Activated T-helper 2 cell treated with anti-CD3 and anti-CD28 coated beads, Interferon-gamma antibody, Interleukin-2, Interleukin-4, amounts not matched to agents 10 μg/mL and 5 μg/mL and 100 μg/mL, durations not matched to agents 14 hours and 24 hours and 36 hours (primary cell): ENCODE measurements at regions of chr3 and their contacts with region 1.

Region 1: DNA sequence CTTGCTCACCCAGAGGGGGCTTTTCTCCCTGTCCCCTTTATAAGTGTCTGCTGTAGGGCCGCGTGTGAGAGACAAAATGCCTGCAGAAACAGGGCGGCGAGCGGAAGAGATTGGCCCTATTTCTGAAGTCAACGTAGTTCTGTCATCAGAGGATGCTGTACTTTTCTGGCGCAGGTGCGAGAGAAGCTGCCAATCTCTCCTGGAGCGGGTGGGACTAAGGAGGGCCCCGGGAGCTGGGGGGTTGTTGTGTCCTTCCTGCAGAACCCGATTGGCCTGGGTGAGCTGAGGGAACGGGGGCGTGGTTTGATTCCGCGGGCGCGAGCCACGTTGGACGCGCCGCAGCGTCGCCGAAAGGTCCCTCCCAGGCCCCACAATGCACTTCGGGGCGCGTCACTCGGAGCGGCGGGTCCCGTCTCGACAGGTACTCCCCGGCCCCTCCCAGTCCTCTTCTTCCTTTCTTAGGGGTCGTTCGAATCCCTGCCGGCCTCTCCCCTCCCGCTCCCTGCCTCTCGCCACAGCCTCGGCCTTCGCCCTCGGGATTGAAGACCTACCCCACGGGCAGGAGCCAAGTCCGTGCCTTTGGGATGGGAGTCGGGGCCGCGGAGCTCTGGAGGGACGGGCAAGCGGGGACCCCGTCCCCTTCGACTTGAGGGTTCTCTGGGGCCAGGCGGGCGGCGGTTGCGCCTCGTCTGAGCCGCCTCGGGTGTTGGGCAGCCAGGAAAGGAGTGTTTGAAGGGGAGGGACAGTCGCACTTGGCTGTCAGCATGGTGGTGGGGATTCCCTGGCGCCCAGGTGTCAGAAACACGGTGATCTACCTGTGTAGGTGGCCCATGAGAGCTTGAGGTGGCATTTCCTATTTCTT is at the start of gene SEC22A:
- DNase-seq: peak; percentile 96
- H3K4me3 Mint-ChIP-seq: peak within 1 kb of the TSS; percentile 85
- H3K27ac Mint-ChIP-seq: peak within 1 kb of the TSS; percentile 93
- H3K4me1 Mint-ChIP-seq: peaks cover 21% of the 10 kb centered on the region
- H3K27me3 Mint-ChIP-seq: peaks cover 9% of the 10 kb centered on the region
- total RNA-seq, gene SEC22A: 17.0 and 18.5 TPM in 2 replicates

Region 2: DNA sequence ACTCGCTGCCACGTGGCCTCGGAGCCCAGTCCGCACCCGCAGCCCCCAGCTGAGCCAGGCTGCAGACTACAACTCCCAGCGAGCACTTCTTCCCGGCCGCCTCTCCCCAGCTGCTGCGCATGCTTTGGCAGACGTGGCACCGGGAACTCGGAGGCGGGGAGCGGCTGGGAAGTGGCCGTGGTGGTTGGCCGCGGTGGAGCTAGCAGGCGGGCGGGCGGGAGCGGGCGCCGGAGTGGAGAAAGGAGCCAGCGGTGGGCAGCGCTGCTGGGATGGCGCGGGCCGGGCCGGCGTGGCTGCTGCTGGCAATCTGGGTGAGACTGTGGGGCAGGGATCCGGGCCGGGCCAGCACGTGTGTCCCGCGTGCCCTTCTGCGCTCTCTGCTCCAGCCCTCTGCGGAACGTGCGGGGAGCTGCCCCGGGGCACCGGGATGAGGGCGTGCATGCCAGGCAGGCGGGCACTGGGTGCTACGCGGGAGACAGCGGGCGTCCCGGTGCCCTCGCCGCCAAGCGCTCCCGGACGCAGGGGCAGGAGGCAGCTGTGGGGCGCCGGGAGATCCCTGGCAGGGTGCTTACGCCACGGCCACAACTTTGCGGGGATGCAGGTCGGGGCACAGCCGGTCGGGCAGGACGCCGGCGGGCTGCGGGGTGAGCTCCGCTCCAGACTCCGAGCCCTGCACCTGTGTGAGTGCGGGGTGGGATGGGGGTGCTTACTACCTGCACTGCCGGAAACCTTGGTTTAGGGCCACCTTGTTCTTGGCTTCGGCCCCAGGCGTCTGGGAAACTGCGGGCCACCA is 134.7 kb before region 1 on chr3 and contains the start of gene PDIA5:
- intact Hi-C with region 1: loop called (anchors 5 kb)
- DNase-seq: peak; percentile 57
- H3K4me3 Mint-ChIP-seq: peak within 1 kb of the TSS; percentile 85
- H3K27ac Mint-ChIP-seq: peak within 1 kb of the TSS; percentile 17
- H3K4me1 Mint-ChIP-seq: peaks cover 35% of the 10 kb centered on the region
- H3K27me3 Mint-ChIP-seq: peaks cover 7% of the 10 kb centered on the region
- total RNA-seq, gene PDIA5: 29.0 and 32.3 TPM in 2 replicates

Region 3: GRCh38 chr3:123113889-123114450 is 87.8 kb before region 1 on chr3:
- intact Hi-C with region 1: no loop called
- DNase-seq: no peak
- H3K4me3 Mint-ChIP-seq: no peak overlapping the region
- H3K27ac Mint-ChIP-seq: no peak overlapping the region
- H3K4me1 Mint-ChIP-seq: peaks cover 9% of the 10 kb centered on the region
- H3K27me3 Mint-ChIP-seq: no peaks in the 10 kb centered on the region

Region 4: DNA sequence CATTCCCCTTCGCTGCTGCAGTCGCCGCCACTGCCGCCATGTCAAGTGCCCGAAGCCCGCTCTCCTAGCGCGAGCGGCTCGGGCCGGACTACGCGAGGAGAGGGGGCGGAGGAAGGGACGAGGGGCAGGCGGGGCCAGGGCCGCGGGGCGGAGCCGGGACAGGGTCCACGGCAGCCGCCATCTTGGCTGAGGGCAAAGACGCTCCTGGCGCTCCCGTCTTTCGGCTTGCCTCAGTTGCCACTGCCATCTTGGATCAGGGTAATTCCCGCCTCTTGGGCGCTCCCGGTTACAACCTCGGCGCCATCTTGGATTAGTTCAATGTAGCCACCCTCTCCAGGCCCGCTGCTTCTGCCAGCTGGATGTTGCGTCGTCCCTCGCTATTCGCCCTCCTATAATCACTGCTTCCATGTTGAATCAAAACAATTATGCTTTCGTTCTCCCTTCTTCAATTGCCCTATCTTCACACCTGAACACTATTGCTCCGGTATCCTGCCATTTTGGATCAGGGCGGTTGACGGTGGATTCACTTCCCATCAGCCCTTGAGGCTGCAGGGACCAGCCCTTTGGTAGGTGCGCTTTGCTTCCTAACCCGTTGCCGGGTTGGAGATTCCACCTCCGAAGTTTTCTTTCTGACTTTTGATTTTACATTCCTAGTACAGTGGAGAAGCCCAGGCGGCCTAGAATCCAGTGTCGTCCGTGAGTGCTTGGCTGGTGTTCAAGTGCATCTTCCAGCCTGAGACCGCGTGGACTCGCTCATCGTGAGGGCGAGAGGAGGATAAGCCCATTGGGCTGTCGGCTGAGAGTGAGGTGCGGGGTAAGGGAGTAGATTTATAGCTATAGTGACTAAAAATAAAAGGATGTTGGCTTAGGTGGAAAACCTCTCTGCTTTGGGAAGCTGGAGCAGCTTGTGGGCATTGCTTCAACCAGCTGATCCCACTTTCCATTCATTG is 383.5 kb after region 1 on chr3 and contains the start of gene HACD2:
- intact Hi-C with region 1: loop called (anchors 5 kb)
- DNase-seq: peak; percentile 92
- H3K4me3 Mint-ChIP-seq: no peak within 1 kb of the TSS
- H3K27ac Mint-ChIP-seq: peak within 1 kb of the TSS; percentile 72
- H3K4me1 Mint-ChIP-seq: peaks cover 20% of the 10 kb centered on the region
- H3K27me3 Mint-ChIP-seq: no peaks in the 10 kb centered on the region
- total RNA-seq, gene HACD2: 29.5 and 32.5 TPM in 2 replicates